Ascending aorta (tissue), 2 donors: ENCODE measurements at regions of chr2 and their contacts with region 1.

Region 1: GRCh38 chr2:96638144-96639121 is at the start of gene KANSL3:
- DNase-seq: peak; percentile 38 to 93
- H3K4me3 ChIP-seq: peak within 1 kb of the TSS; percentile 85 to 89
- H3K27ac ChIP-seq: peak within 1 kb of the TSS; percentile 95 to 99
- H3K4me1 ChIP-seq: peaks cover 4 to 21% of the 10 kb centered on the region in 2 donors
- H3K27me3 ChIP-seq: no peaks in the 10 kb centered on the region
- CTCF ChIP-seq: peak in 2 of 3 experiments; percentile 10 to 19
- total RNA-seq, gene KANSL3: 56.1 TPM

Region 2: GRCh38 chr2:96265840-96266679 is 372.4 kb before region 1 on chr2 and contains the starts of genes CIAO1 and TMEM127:
- intact Hi-C with region 1: loop called (anchors 10 kb)
- DNase-seq: peak; percentile 95 to 99
- H3K4me3 ChIP-seq: peak within 1 kb of the TSS; percentile 81 to 84
- H3K27ac ChIP-seq: peak within 1 kb of the TSS; percentile 94
- H3K4me1 ChIP-seq: peaks cover 15 to 38% of the 10 kb centered on the region in 2 donors
- H3K27me3 ChIP-seq: no peaks in the 10 kb centered on the region
- CTCF ChIP-seq: peak; percentile 20 to 57 (median 24)
- total RNA-seq, gene CIAO1: 127 TPM
- total RNA-seq, gene TMEM127: 61.9 TPM

Region 3: DNA sequence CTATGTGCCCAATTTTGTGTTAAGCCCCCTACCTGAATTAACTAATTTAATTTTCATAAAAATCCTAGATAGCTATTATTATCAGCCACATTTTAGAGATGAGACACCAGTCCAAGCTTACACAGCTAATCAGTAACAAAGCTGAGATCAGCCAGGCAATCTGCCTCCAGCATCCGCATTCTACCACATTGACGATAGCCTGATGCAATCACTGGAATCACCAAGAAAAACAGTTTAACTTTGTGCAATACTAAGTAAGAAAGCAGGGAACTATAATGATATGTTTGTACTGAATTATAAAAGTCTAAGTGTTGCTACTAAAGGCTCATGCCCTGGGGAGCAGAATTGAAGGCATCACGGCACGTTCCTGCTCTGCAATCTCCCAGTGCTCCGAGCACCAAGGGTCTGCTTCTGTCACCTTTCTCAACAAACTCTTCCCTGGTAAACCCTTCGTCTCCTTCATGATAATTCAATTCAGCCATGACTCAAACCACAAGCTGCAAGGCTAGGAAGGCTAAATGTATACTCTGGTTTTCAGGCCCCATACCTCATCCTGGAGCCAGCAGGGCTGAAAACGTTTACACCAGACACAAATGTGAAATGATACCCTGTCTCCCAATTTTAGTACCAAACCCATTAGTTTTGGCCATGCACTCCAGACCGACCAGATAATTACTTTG is 19.7 kb before region 1 on chr2:
- intact Hi-C with region 1: loop called (anchors 1 kb)
- DNase-seq: peak in 1 of 2 donors; percentile 77
- H3K4me3 ChIP-seq: no peak overlapping the region
- H3K27ac ChIP-seq: peak overlapping the region; percentile 67
- H3K4me1 ChIP-seq: peaks cover 3 to 25% of the 10 kb centered on the region in 2 donors
- H3K27me3 ChIP-seq: no peaks in the 10 kb centered on the region
- CTCF ChIP-seq: no peak

Region 4: DNA sequence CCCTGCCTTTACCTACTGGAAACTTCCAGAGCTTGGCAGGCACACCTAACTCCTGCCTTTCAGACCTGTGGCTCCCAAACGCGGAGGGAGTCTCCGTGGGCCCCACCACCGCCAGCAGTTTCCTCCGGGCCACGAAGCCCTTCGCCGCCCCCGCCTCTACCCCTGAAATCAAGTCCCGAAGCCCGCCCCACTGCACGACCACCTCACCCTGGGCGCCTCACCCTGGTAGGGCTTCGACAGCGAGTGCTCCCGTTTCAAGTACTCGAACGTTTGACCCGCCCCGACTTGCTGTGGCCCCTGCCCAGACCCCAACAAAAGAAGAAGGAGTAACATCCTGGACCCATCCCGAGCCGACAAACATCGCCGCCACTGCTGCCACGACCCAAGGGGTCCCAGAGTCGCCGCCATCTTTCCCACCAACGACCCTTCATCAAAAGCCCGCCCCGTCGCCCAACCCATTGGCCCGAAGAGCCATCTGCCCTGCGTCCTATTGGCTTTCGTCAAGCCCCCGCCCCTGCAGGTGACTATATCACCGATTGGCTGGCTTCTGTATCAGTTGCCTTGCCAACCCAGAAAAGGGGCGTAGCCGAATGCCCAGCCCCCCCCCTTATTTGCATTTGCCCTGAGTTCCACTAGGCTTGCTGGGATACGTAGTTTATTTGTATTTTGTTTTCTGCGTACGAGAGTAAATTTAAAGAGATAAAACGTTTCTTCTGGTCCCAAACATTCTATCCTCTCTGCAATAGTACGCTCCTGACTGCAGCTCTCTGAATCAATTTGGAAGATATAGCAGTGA is 101.4 kb after region 1 on chr2 and contains the start of gene LMAN2L:
- intact Hi-C with region 1: loop called (anchors 1 kb)
- DNase-seq: peak; percentile 97 to 99
- H3K4me3 ChIP-seq: peak within 1 kb of the TSS; percentile 80 to 92
- H3K27ac ChIP-seq: peak within 1 kb of the TSS; percentile 66 to 73
- H3K4me1 ChIP-seq: peaks cover 0 to 19% of the 10 kb centered on the region in 2 donors
- H3K27me3 ChIP-seq: no peaks in the 10 kb centered on the region
- CTCF ChIP-seq: peak in 1 of 3 experiments; percentile 9
- total RNA-seq, gene LMAN2L: 9.5 TPM

Region 5: GRCh38 chr2:96868555-96869280 is 230.3 kb after region 1 on chr2:
- intact Hi-C with region 1: loop called (anchors 1 kb)
- DNase-seq: peak; percentile 73 to 95
- H3K4me3 ChIP-seq: peak overlapping the region; percentile 88 to 98
- H3K27ac ChIP-seq: peak overlapping the region; percentile 96 to 99
- H3K4me1 ChIP-seq: peaks cover 18 to 38% of the 10 kb centered on the region in 2 donors
- H3K27me3 ChIP-seq: no peaks in the 10 kb centered on the region
- CTCF ChIP-seq: peak; percentile 51 to 66 (median 62)